Heart right ventricle (tissue), 16 donors: ENCODE measurements at regions of chr9 and their contacts with region 1.

Region 1: GRCh38 chr9:84932915-84933527 is 263.5 kb downstream of the NTRK2 start:
- DNase-seq: no peak
- ATAC-seq: no peak
- H3K4me3 ChIP-seq: no peak overlapping the region
- H3K27ac ChIP-seq: no peak overlapping the region
- H3K4me1 ChIP-seq: no peaks in the 10 kb centered on the region
- H3K27me3 ChIP-seq: peaks cover 0 to 8% (median 0%) of the 10 kb centered on the region in 7 donors
- CTCF ChIP-seq: peak in 1 of 9 donors; percentile 12

Region 2: DNA sequence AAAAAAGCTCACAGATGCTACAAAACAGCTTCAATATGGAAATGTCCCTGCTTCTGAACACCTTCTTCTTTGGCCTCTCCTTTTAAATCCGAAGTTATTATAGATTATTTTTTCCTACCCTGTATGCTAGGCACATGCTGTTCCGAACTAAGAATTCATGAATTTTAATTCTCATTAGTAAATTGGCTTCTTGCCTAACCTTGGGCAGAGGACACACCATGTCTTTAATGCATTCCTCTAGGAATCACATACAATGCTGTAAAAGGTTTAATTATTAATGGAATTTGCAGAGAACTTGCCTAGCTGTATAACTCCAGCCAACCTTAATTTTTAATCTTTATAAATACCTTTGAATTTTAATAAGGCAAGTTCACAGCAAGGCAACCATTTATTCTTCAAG is 29.1 kb before region 1 on chr9:
- intact Hi-C with region 1: loop called in 1 of 10 experiments (anchors 2 kb)
- DNase-seq: no peak
- ATAC-seq: no peak
- H3K4me3 ChIP-seq: no peak overlapping the region
- H3K27ac ChIP-seq: no peak overlapping the region
- H3K4me1 ChIP-seq: peaks cover 0 to 4% (median 0%) of the 10 kb centered on the region in 9 donors
- H3K27me3 ChIP-seq: no peaks in the 10 kb centered on the region
- CTCF ChIP-seq: no peak

Region 3: GRCh38 chr9:84990102-84990815 is 57.2 kb after region 1 on chr9:
- intact Hi-C with region 1: loop called in 1 of 10 experiments (anchors 10 kb)
- DNase-seq: no peak
- ATAC-seq: no peak
- H3K4me3 ChIP-seq: no peak overlapping the region
- H3K27ac ChIP-seq: no peak overlapping the region
- H3K4me1 ChIP-seq: no peaks in the 10 kb centered on the region
- H3K27me3 ChIP-seq: peaks cover 0 to 8% (median 0%) of the 10 kb centered on the region in 7 donors
- CTCF ChIP-seq: no peak

Region 4: DNA sequence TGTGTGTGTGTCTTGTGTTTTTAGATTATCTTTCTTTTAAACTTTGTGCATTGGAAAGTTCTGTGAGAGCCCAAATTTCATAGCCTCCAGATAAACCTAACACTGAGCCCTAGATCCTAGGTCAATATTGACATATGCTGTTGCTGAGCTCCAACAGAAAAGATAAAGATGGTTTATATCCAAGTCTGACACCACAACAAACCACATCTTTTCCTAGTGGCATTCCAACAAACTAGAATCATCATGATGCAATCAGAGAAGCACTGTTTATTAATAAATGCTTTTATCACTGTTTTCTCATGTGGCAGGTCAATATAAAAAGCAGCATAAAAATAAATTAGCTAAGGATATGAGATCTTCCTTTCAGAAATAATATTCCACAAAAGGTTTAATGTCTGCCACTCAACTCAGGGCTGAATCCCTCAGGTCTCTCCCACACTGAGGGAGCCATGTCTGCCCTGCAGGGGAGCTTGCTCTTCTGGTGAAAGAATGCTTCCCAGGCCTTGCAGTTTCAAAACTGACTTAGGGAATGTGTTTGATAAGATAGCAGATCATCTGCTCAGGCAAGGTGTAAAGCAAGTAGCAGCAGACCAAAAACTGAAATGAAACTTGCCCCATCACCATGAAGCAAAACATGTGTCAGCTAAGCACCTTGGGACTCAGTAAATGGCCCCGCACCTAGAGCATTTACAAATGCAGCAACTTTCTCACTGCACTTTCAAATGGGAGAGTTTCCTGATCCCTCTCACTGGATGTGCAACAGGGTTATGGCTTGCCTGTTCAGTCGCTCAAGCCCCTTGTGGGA is 315.7 kb after region 1 on chr9:
- intact Hi-C with region 1: no loop called
- DNase-seq: no peak
- ATAC-seq: peak in 3 of 8 donors; percentile 46 to 61 (median 49)
- H3K4me3 ChIP-seq: no peak overlapping the region
- H3K27ac ChIP-seq: no peak overlapping the region
- H3K4me1 ChIP-seq: peaks cover 0 to 8% (median 0%) of the 10 kb centered on the region in 9 donors
- H3K27me3 ChIP-seq: no peaks in the 10 kb centered on the region
- CTCF ChIP-seq: no peak